WTC11 (cell line): ENCODE measurements at regions of chr5 and their contacts with region 1.

Region 1: GRCh38 chr5:60668686-60669304 is 31.2 kb downstream of the DEPDC1B start:
- DNase-seq: no peak
- ATAC-seq: no peak
- H3K4me3 Mint-ChIP-seq: no peak overlapping the region
- H3K27ac Mint-ChIP-seq: no peak overlapping the region
- H3K4me1 Mint-ChIP-seq: peaks cover 13% of the 10 kb centered on the region
- H3K27me3 Mint-ChIP-seq: no peaks in the 10 kb centered on the region
- CTCF ChIP-seq: peak; percentile 63

Region 2: DNA sequence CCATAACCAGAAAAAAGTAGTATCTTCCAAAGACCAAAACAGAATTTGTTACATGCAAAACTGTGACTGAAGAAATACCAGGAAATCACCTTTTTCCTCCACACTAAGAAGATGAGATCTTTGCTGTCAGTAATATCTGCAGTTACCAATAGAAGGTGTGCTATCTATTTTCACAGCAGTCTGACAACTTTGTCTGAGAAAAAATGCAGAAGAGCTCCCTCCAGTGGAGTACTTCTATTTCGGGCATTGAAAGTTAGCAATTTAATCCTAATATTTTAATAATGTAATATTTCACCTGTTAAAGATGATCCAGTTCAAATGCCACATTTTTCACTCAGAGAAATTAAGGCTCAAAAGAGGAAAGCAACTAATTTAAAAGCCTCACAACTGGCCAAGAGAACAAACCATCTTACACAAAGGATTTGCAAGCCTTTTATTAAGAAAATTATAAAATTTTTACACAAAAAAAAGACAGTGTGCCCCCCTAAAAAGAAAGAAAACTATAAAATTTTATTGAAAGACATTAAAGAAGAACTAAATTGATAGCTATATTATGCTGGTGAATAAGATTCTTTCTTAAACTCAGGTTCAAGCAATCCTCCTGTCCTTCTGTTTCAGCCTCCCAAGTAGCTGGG is 19.4 kb before region 1 on chr5:
- CTCF ChIA-PET with region 1: interaction called, 11 read pairs
- POLR2A ChIA-PET with region 1: no interaction called
- DNase-seq: no peak
- ATAC-seq: no peak
- H3K4me3 Mint-ChIP-seq: no peak overlapping the region
- H3K27ac Mint-ChIP-seq: no peak overlapping the region
- H3K4me1 Mint-ChIP-seq: peaks cover 6% of the 10 kb centered on the region; the same call in 1 of the 2 replicates
- H3K27me3 Mint-ChIP-seq: no peaks in the 10 kb centered on the region
- CTCF ChIP-seq: no peak